Aorta (tissue), 5 donors: ENCODE measurements at regions of chr19 and their contacts with region 1.

Region 1: GRCh38 chr19:49983645-49984229 is 22.8 kb upstream of the SIGLEC11 start:
- DNase-seq: peak; percentile 67 to 85
- ATAC-seq: peak; percentile 60
- H3K4me3 ChIP-seq: no peak overlapping the region
- H3K27ac ChIP-seq: no peak overlapping the region
- H3K4me1 ChIP-seq: no peaks in the 10 kb centered on the region
- H3K27me3 ChIP-seq: no peaks in the 10 kb centered on the region

Region 2: DNA sequence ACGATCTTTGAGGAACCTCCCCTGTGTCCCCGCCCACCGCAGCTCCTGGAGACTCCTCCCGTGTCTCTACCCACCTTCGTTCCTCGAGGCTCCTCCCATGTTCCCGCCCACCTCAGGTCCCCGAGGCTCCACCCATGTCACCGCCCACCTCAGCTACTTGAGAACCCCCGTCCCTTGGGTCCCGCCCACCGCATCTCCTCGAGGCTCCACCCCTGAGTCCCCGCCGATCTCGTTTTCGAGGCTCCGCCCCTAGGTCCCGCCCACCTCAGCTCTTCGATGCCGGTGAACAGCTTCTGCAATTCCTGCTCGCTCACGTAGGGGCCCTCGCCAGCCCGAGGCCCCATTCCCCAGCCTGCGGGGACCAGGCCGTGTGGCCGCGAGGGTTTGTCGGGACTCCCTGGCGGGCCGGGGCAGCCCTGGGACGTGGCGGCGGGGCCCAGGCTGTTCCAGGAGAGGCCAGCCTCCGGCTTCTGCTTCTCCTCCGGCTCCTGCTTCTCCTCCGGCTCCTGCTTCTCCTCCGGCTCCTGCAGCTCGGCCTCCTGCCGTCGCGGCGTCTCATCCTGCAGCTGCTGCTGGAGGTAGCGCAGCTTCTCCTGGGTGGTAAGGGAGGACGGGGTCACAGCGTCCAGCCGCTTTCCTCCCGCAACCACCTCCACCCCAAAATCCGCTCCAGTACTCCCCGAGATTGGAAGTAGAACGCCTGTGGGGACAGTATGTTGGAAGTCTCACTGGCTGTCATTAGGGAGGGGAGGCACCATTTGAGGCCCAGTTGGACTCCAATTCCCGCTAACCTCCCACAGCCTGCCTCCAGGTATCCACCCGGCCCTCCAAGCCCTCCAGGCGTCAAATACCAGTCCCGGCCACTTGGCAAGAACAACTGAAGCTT is 237.3 kb before region 1 on chr19:
- intact Hi-C with region 1: no loop called
- DNase-seq: peak; percentile 83 to 85
- ATAC-seq: peak; percentile 30
- H3K4me3 ChIP-seq: no peak overlapping the region
- H3K27ac ChIP-seq: no peak overlapping the region
- H3K4me1 ChIP-seq: no peaks in the 10 kb centered on the region
- H3K27me3 ChIP-seq: no peaks in the 10 kb centered on the region

Region 3: DNA sequence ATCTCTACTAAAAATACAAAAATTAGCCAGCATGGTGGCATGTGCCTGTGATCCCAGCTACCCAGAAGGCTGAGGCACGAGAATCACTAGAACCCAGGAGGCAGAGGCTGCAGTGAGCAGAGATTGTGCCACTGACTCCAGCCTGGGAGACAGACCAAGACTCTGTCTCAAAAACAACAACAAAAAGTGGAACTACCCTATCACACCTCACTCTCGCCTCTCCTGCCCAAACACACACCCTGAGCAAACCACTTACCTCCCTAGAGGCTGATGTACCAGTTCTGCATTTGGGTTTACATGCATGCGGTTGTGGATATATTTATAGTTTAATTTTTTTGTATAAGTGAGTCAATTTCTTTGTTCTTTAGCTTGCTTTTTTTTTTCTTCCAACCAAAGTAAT is 140.5 kb before region 1 on chr19:
- intact Hi-C with region 1: no loop called
- DNase-seq: no peak
- ATAC-seq: no peak
- H3K4me3 ChIP-seq: no peak overlapping the region
- H3K27ac ChIP-seq: no peak overlapping the region
- H3K4me1 ChIP-seq: no peaks in the 10 kb centered on the region
- H3K27me3 ChIP-seq: no peaks in the 10 kb centered on the region

Region 4: GRCh38 chr19:49937750-49938381 is 45.9 kb before region 1 on chr19:
- intact Hi-C with region 1: loop called (anchors 1 to 5 kb)
- DNase-seq: peak; percentile 82 to 95
- ATAC-seq: peak; percentile 90
- H3K4me3 ChIP-seq: no peak overlapping the region
- H3K27ac ChIP-seq: no peak overlapping the region
- H3K4me1 ChIP-seq: no peaks in the 10 kb centered on the region
- H3K27me3 ChIP-seq: no peaks in the 10 kb centered on the region

Region 5: GRCh38 chr19:50025024-50025789 is 41.5 kb after region 1 on chr19 and contains the start of gene VRK3:
- intact Hi-C with region 1: no loop called
- DNase-seq: peak; percentile 100
- ATAC-seq: peak; percentile 98
- H3K4me3 ChIP-seq: peak within 1 kb of the TSS; percentile 84 to 93
- H3K27ac ChIP-seq: peak within 1 kb of the TSS in 1 of 2 donors; percentile 83
- H3K4me1 ChIP-seq: no peaks in the 10 kb centered on the region
- H3K27me3 ChIP-seq: no peaks in the 10 kb centered on the region
- total RNA-seq, gene VRK3: 36.7 to 40.5 TPM